Calu3 (cell line): ENCODE measurements at regions of chr1 and their contacts with region 1.

Region 1: DNA sequence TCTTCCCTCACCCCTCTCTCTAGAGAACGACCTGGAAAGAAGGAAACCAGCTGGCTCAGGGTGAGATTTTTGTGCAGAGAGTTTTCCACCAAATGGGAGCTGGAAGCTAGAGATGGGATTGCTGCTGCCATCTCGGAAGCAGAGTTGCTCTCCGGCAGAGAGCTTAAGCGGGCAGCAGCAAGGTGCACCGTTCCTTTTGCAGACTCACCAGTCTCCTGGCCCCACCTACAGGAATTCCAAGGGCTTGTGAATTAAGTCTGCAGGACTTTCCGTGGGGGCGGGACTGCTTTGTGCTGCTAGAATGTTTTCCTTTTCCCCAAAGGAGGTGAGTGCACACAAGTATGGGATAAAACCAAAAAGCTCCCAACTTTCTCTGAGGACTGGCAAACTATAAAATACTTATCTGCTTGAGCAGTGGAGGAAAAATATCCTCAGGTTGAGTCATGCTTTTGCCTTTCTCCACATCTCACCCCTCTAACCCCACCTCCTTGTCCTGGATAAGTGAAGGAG is 29.1 kb upstream of the KIAA0040 start:
- DNase-seq: peak; percentile 71
- H3K4me3 Mint-ChIP-seq: no peak overlapping the region
- H3K27ac Mint-ChIP-seq: no peak overlapping the region
- H3K4me1 Mint-ChIP-seq: peaks cover 8% of the 10 kb centered on the region
- H3K27me3 Mint-ChIP-seq: no peaks in the 10 kb centered on the region
- CTCF ChIP-seq: no peak

Region 2: DNA sequence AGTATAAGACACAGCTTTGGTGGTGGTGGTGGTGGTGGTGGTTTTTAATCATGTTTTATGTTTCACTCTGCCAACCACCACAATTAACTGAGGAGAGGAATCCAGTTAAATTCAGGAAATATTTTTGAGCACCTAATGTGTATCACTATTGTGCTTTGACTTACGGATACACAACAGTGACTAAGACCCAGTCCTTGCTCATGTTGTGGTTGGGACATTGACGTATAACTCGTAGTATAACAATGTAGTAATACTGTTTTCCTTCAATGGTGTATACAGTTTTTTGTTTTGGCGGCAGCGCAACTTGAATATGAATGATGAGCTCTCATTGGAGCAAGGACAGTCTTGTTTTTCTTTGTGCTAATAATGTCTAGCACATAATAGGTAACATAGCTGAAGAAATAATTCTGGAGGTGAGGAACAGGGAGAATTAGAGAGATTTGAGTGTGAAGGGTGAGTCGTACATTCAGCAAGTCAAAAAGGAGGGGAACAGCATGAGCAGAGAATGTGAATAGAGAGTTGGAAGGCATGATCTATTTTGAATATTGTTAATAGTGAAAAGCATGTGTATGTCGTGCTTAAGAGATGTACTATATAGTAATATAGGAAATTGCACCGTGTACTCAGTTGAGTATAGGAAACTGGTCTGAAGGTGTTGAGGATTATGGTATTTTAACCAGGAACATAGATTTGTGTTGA is 216.5 kb before region 1 on chr1:
- CTCF ChIA-PET with region 1: no interaction called
- intact Hi-C with region 1: no loop called
- DNase-seq: no peak
- H3K4me3 Mint-ChIP-seq: no peak overlapping the region
- H3K27ac Mint-ChIP-seq: peak overlapping the region; percentile 0
- H3K4me1 Mint-ChIP-seq: peaks cover 34% of the 10 kb centered on the region
- H3K27me3 Mint-ChIP-seq: no peaks in the 10 kb centered on the region
- CTCF ChIP-seq: no peak

Region 3: GRCh38 chr1:175146529-175147213 is 75.0 kb before region 1 on chr1:
- CTCF ChIA-PET with region 1: interaction called, 25 read pairs
- intact Hi-C with region 1: no loop called
- DNase-seq: peak; percentile 83
- H3K4me3 Mint-ChIP-seq: no peak overlapping the region
- H3K27ac Mint-ChIP-seq: no peak overlapping the region
- H3K4me1 Mint-ChIP-seq: peaks cover 14% of the 10 kb centered on the region
- H3K27me3 Mint-ChIP-seq: peaks cover 83% of the 10 kb centered on the region
- CTCF ChIP-seq: peak; percentile 89

Region 4: DNA sequence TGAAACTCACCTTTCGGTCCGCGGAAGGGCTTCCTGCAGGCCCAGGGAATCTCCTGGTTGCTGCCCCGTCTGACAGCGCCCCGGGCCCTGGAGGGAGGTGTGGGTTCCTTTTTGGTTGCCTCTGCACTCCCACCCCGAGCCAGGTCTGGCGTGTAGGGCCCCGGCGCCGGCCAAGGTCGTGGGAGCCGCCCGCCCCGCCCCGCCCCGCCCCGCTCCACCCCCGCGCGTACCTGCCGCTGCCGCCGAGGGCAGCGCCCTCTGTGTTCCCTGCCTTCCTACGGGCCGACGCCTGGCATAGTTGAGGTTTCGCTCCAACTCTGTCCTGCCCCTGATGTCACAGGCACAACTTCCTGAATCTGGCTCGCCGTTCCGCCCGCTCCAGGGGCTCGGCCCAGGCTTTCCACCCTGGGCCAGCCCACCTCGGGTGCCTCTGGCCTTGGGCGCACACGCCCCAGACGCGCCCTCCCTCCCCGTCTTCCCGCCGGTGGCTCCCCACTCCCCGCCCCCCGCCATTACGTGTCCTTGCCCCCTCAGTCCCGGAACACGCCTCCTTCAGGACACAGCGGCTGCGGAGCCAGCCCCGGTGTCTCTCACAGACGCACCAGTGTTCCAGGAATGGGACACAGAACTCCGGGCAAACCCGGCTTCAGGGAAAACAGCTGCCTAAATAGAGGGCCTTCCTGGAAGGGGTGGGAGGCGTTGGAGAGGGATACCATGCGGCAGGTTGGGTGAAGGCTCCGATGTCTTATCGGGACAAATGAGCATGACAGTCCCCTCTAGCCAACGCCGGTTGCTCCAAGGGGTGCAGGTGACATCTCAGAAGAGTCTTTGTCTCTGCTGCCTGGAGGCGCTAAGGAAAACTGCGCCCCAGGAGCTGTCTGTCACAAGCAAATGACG is 28.8 kb before region 1 on chr1 and contains the start of gene KIAA0040:
- CTCF ChIA-PET with region 1: interaction called, 11 read pairs
- intact Hi-C with region 1: no loop called
- DNase-seq: peak; percentile 87
- H3K4me3 Mint-ChIP-seq: peak within 1 kb of the TSS; percentile 86
- H3K27ac Mint-ChIP-seq: peak within 1 kb of the TSS; percentile 89
- H3K4me1 Mint-ChIP-seq: peaks cover 49% of the 10 kb centered on the region
- H3K27me3 Mint-ChIP-seq: no peaks in the 10 kb centered on the region
- CTCF ChIP-seq: peak; percentile 13
- total RNA-seq, gene KIAA0040: 24.3 and 33.4 TPM in 2 replicates

Region 5: GRCh38 chr1:175319418-175320230 is 97.9 kb after region 1 on chr1:
- CTCF ChIA-PET with region 1: interaction called, 3 read pairs
- intact Hi-C with region 1: loop called (anchors 1 kb)
- DNase-seq: peak; percentile 77
- H3K4me3 Mint-ChIP-seq: no peak overlapping the region
- H3K27ac Mint-ChIP-seq: no peak overlapping the region
- H3K4me1 Mint-ChIP-seq: peaks cover under 1% of the 10 kb centered on the region
- H3K27me3 Mint-ChIP-seq: peaks cover 30% of the 10 kb centered on the region
- CTCF ChIP-seq: peak; percentile 88

Region 6: DNA sequence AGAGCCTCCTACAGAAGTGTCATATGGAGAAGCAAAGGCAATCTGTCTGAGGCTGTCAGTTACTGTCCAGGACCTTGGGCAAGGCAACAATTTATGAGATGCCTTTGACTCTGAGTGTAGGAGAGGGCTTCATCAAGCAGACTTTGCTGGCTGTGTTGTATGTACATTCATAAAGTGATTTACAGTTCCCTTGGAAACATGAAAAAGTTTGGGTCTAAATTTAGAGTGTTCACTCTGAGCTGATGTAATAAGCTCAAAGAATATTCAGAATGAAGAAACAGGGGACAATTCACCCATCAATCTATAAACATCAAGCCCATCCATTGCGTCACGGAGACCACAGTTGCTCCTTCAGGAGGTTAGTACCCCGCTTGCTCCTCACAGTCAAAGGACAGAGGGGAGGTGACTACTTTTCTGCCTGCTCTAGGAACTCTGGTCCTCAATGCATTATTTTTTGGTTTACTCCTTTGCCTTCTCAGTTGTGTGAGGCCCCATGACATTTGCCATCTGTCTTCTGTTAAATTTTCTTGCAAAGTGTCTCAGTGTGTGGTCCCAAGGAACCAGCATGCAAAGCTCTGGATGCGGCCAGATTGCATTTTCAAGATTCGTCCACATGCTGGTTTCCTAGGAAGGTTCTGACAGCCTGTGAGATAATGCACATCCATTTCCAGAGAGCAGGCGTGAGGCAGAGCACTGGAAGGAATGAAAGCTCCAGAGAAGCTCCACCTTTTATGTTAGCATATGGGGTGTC is 212.0 kb after region 1 on chr1:
- CTCF ChIA-PET with region 1: no interaction called
- intact Hi-C with region 1: no loop called
- DNase-seq: no peak
- H3K4me3 Mint-ChIP-seq: no peak overlapping the region
- H3K27ac Mint-ChIP-seq: no peak overlapping the region
- H3K4me1 Mint-ChIP-seq: no peaks in the 10 kb centered on the region
- H3K27me3 Mint-ChIP-seq: peaks cover 51% of the 10 kb centered on the region
- CTCF ChIP-seq: no peak